OCI-LY7 (cell line): ENCODE measurements at regions of chr4 and their contacts with region 1.

Region 1: DNA sequence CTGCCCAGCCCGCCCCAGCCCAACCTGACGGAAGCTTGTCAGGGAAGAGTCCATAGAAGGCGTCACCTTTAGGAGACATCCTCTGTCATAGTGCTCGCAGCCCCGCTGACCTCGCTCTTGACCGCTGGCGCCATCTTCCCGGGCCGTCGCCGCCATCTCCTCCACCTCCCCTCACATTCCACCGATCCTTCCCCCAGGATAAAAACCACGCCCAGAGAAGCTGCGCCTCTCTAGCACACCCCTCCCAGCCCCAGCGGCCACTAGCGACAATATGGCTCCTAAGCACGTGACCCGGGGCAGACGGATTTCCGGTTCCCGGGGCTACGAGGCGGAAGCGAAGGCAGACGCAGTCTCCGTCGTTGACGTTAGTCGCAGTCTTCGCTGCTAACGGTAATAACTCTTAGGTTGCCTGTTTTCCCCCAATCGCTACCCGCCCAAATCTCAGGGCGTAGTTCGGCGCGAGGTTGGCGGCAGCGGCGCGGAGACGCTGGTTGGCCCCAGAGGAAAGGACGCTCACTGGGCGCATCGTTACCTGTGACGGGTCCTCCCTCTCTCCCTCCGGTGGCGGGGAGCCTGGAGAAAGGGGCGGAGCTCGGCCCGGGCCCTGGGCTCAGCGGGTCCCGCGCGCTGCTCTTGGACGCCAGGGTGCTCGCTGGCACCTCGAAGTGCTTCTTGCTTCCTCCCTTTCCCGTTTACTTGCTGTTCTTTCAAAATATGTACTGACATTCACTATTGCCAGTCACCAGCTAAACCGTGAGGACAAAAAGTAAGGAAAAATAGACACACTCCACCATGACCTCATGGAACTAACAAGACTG is at the starts of genes RCHY1 and THAP6:
- DNase-seq: peak; percentile 93
- H3K4me3 ChIP-seq: peak within 1 kb of the TSS; percentile 87
- H3K27ac ChIP-seq: peak within 1 kb of the TSS; percentile 92
- H3K4me1 ChIP-seq: peaks cover 34% of the 10 kb centered on the region
- CTCF ChIP-seq: 0 out of 2 replicates have a peak, but pooled peaks have one; percentile 10
- total RNA-seq, gene RCHY1: 7.7 and 9.2 TPM in 2 replicates
- total RNA-seq, gene THAP6: 15.9 and 17.2 TPM in 2 replicates

Region 2: DNA sequence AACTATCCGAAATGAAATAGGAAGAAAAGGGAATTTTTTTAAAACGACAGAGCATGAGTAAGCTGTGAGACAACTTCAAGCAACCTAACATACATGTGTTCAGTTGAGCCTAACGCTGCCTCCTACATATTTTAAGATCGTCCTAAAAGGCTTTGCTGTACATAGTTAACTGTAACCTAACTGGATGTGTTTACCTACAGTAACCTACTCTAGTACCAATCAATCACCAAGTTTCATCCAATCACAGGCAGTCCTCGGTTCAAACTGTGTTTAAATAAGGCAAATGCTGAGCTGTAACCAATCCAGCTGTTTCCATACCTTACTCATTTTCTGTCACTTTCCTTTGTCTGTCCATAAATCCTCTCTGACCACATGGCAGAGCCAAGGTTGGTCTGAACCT is 17.2 kb before region 1 on chr4:
- CTCF ChIA-PET with region 1: interaction called, 5 read pairs
- POLR2A ChIA-PET with region 1: interaction called, 18 read pairs
- intact Hi-C with region 1: no loop called
- DNase-seq: no peak
- H3K4me3 ChIP-seq: no peak overlapping the region
- H3K27ac ChIP-seq: no peak overlapping the region
- H3K4me1 ChIP-seq: no peaks in the 10 kb centered on the region
- CTCF ChIP-seq: no peak

Region 3: GRCh38 chr4:75525910-75526309 is 11.6 kb after region 1 on chr4:
- CTCF ChIA-PET with region 1: no interaction called
- POLR2A ChIA-PET with region 1: interaction called, 19 read pairs
- intact Hi-C with region 1: no loop called
- DNase-seq: no peak
- H3K4me3 ChIP-seq: no peak overlapping the region
- H3K27ac ChIP-seq: no peak overlapping the region
- H3K4me1 ChIP-seq: no peaks in the 10 kb centered on the region
- CTCF ChIP-seq: no peak

Region 4: DNA sequence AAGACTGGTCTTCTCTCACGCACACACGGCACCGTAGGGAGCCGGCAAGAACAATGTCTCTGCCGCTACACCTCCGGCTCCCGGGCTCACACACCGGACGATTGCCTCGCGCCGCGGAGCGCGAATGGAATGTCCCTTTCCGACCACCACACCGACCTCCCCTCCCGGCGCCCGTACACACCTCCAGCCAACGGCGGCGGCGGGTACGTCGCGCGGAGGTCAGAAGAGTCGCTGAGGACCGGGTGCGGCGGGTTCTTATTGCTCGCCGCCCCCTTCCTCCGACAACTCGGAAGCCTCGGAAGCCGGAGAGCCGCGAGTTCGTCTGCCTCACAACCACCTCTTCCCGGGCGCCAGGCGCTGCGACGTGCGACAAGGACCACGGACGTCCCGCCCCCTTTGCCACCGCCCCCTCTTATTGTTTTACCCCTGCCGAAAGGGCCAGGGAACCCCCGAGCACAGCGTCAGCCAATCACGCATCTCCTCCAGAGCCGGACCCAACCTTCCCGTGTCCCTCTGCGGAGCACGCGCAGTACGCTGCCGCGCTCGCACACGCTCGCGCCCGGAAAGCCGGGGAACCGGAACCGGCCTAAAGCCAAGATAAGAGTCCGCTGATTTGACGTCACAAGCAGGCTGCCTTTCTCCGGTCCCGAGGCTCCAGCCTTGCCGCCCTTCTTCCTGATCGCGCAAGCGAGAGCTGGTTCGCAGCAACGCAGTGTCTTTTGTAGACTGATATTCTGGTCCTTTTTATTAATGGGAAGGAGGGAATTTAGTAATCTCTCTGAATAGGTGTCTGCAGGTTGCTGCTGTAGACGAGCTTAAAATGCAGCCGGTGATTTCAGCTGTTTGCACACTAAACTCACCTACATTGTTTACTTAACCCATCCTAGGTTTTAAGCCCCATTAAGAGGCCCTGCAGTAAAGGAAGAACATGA is 159.0 kb after region 1 on chr4 and contains the start of gene G3BP2:
- CTCF ChIA-PET with region 1: no interaction called
- POLR2A ChIA-PET with region 1: no interaction called
- intact Hi-C with region 1: loop called (anchors 2 kb)
- DNase-seq: peak; percentile 99
- H3K4me3 ChIP-seq: peak within 1 kb of the TSS; percentile 95
- H3K27ac ChIP-seq: peak within 1 kb of the TSS; percentile 87
- H3K4me1 ChIP-seq: peaks cover 41% of the 10 kb centered on the region
- CTCF ChIP-seq: no peak
- total RNA-seq, gene G3BP2: 55.9 and 56.7 TPM in 2 replicates

Region 5: DNA sequence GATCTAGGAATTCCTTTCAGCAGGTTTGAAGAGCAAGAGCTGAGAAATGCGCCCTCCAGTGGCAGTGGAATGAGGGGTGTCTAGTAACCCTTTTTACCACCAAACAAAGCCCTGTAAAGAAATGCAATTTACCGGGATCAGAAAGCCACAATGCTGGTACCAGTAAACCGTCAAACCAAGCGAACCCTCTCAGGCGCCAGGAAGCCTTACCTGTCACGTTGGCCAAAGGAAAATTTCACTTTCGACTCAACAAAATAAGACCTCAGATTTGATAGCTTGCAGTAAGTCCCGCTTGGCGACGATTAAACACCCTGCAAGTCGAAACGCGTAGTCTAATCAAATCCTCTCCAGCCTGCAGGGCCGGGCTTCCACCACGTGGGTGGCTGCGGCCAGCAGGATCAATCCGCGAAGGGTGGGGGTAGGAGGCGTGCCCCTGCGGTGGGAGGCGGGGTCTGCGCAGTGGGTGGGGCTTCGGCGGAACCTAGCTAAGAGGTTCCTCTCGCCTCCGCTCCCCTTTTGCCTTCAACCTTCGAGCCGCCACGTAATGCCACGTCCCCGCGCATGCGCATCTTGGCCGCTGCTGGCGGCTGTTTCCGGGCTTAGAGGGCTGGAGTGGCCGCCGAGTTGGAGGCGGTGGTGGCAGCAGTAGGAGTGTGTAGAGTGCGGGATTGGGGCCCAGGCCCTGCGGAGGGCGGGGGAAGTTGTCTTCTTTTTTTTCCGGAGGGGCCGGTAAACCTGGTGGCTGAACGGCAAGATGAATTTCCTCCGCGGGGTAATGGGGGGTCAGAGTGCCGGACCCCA is 209.9 kb after region 1 on chr4 and contains the start of gene USO1:
- CTCF ChIA-PET with region 1: no interaction called
- POLR2A ChIA-PET with region 1: interaction called, 11 read pairs
- intact Hi-C with region 1: loop called (anchors 1 kb)
- DNase-seq: peak; percentile 98
- H3K4me3 ChIP-seq: peak within 1 kb of the TSS; percentile 84
- H3K27ac ChIP-seq: peak within 1 kb of the TSS; percentile 76
- H3K4me1 ChIP-seq: peaks cover 38% of the 10 kb centered on the region
- CTCF ChIP-seq: peak; percentile 95
- total RNA-seq, gene USO1: 38.0 and 40.5 TPM in 2 replicates